Testis (tissue), 5 donors: ENCODE measurements at regions of chr21 and their contacts with region 1.

Region 1: DNA sequence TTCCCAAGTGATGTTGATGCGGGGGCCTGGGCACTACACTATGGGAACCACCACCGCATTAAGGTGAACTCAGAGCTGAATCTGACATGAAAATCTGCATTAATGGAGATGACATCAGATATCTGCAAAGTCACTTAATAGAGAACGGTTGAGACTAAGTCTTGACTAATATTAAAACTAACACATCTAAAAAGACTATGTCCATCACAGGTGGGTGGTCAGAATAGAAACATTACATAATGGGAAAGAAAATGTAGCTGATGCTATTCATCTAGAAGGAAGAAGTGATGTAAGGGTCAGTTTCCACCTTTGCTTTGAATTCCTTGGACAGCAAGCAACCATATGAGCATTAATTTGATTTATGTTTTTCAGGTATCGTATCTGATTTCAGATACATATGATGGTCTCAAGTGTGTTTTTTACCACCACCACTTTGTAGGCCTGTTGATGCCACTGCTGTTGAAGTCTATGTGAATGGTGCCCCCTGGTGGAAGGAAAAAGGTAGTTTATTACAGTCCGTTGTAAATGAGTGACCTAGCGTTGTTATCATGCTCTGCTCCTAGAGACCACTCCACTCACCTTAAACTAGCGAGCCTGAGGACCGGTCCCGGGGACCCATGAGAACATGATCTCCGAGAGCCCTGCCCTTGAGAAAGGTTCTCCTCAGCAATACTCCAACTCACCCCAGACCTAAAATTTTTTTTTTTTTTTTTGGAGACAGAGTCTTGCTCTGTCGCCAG is 73.5 kb downstream of the BACH1 start:
- DNase-seq: peak; percentile 78
- H3K4me3 ChIP-seq: no peak overlapping the region
- H3K27ac ChIP-seq: no peak overlapping the region
- H3K4me1 ChIP-seq: no peaks in the 10 kb centered on the region
- H3K27me3 ChIP-seq: no peaks in the 10 kb centered on the region
- CTCF ChIP-seq: peak; percentile 81 to 88 (median 83)
- POLR2A ChIP-seq: no peak

Region 2: DNA sequence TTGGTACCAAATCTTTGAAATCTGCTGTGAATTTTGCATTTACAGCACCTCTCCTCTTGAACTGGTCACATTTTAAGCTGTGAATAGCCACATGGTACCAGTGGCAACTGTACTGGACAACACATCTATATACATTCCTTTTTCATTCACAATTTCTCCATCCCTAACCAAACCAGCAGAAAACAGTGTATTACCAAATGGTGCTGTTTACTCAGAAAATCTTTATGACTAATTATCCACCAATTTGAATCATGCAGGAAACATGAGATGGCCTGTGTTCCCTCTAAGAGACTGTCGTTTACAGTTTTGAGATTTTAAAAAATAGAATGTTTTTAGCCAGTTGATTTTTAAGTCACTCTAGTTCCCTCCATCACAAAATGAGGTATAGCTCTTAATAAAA is 281.2 kb before region 1 on chr21:
- intact Hi-C with region 1: loop called (anchors 5 kb)
- DNase-seq: no peak
- H3K4me3 ChIP-seq: no peak overlapping the region
- H3K27ac ChIP-seq: no peak overlapping the region
- H3K4me1 ChIP-seq: peaks cover 2% of the 10 kb centered on the region
- H3K27me3 ChIP-seq: no peaks in the 10 kb centered on the region
- CTCF ChIP-seq: no peak
- POLR2A ChIP-seq: no peak

Region 3: DNA sequence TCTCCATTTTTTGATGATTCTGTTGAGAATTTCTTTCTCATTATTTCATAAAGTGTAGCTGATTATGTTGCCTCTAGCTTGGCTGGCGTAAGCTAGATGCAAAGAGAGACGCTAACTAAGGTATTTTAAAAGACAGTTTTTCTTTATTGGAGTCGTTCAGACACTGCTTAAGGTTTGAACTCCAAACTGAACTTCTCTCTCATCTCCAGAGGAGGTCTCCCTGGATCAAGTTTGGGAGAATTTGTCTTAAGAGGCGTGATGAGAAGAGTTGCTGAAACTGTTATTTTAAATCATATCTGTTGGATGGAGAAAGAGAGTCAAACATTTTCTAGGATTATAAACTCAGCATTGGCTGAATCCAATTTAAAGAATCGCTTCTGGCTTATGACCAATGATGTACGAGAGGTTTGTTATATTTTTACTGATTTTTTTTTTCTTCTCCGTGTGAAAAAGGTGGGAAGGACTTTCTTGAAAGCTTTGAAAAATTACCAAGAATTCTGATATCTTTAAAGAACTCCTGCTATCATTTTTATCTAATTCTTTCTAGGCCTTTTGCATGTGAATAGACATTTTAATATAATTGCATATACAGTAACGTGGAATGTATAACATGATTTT is 207.8 kb before region 1 on chr21:
- intact Hi-C with region 1: loop called (anchors 5 kb)
- DNase-seq: no peak
- H3K4me3 ChIP-seq: no peak overlapping the region
- H3K27ac ChIP-seq: no peak overlapping the region
- H3K4me1 ChIP-seq: peaks cover 4% of the 10 kb centered on the region
- H3K27me3 ChIP-seq: no peaks in the 10 kb centered on the region
- CTCF ChIP-seq: peak in 2 of 3 experiments; percentile 43 to 47
- POLR2A ChIP-seq: no peak